Left ventricle myocardium inferior (tissue), 1 donor: ENCODE measurements at regions of chr5 and their contacts with region 1.

Region 1: GRCh38 chr5:151740336-151740942 is 18.0 kb downstream of the ATOX1 start:
- DNase-seq: peak; percentile 71
- H3K4me3 ChIP-seq: peak overlapping the region; percentile 26
- H3K27ac ChIP-seq: peak overlapping the region; percentile 72
- H3K4me1 ChIP-seq: peaks cover 35% of the 10 kb centered on the region
- H3K27me3 ChIP-seq: no peaks in the 10 kb centered on the region
- CTCF ChIP-seq: peak; percentile 95

Region 2: DNA sequence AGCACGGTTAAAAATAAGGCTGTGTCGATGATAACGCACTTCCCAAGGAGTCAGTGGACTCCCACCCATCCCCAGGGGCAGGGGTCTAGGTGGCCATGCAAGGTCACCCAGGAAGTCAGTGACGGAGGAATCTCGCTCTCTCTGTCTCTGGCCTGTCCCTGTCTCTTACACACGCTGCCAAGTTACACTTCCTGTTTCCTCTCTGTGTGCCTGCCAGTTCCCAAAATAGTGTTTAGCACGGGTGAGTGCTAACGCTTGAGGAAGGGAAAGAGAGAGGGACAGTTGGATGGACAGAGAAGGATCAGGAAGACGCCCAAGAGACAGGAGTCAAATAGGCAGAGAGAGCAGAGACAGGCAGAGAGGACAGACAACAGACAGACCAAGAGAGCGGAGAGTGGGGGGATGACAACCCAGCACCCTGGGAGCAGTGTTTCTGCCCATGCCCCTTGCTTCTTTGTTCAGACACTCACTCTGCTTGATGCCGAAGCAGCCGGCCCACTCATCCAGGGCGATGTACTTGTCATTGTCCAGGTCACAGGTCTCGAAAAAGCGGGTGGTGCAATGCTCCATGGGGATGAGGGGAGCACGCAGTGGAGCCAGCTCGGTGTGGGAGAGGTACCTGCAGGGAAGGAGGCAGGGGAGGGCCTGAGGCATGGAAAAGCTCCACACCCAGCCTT is 76.7 kb before region 1 on chr5:
- intact Hi-C with region 1: loop called (anchors 5 kb)
- DNase-seq: peak; percentile 56
- H3K4me3 ChIP-seq: peak overlapping the region; percentile 43
- H3K27ac ChIP-seq: peak overlapping the region; percentile 93
- H3K4me1 ChIP-seq: peaks cover 89% of the 10 kb centered on the region
- H3K27me3 ChIP-seq: no peaks in the 10 kb centered on the region
- CTCF ChIP-seq: no peak

Region 3: GRCh38 chr5:151862811-151863472 is 122.5 kb after region 1 on chr5:
- intact Hi-C with region 1: no loop called
- DNase-seq: no peak
- H3K4me3 ChIP-seq: no peak overlapping the region
- H3K27ac ChIP-seq: no peak overlapping the region
- H3K4me1 ChIP-seq: peaks cover 6% of the 10 kb centered on the region
- H3K27me3 ChIP-seq: no peaks in the 10 kb centered on the region
- CTCF ChIP-seq: no peak